PC-9 (cell line): ENCODE measurements at regions of chr1 and their contacts with region 1.

Region 1: DNA sequence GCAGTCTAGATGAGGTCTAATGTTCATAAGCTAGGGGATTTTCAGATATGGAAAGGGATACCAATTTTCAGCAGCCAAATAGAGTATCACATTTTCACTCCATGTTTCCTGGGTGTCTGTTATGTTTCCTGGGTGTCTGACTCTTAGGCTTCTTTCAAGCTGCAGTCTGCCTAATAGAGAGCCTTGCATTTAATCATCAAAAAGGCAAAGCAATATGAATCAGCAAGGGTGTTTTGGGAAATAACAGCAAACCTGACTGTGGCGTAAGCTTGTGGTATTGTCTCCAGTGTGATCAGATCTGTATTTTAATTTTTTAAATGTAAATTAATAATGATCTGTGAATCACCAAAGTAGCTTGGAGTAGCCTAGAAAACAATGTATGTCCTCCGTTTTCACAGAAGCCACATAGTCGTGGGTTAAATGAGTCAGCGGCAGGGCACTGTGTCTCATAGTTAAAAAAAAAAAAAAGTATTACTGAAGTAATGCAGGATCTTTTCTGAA is 10.4 kb downstream of the LGALS8 start:
- DNase-seq: peak in 1 of 2 experiments; percentile 74
- H3K4me3 ChIP-seq: no peak overlapping the region
- H3K27ac ChIP-seq: peak overlapping the region; percentile 69
- H3K4me1 ChIP-seq: peaks cover 52% of the 10 kb centered on the region
- H3K27me3 ChIP-seq: no peaks in the 10 kb centered on the region
- CTCF ChIP-seq: no peak

Region 2: DNA sequence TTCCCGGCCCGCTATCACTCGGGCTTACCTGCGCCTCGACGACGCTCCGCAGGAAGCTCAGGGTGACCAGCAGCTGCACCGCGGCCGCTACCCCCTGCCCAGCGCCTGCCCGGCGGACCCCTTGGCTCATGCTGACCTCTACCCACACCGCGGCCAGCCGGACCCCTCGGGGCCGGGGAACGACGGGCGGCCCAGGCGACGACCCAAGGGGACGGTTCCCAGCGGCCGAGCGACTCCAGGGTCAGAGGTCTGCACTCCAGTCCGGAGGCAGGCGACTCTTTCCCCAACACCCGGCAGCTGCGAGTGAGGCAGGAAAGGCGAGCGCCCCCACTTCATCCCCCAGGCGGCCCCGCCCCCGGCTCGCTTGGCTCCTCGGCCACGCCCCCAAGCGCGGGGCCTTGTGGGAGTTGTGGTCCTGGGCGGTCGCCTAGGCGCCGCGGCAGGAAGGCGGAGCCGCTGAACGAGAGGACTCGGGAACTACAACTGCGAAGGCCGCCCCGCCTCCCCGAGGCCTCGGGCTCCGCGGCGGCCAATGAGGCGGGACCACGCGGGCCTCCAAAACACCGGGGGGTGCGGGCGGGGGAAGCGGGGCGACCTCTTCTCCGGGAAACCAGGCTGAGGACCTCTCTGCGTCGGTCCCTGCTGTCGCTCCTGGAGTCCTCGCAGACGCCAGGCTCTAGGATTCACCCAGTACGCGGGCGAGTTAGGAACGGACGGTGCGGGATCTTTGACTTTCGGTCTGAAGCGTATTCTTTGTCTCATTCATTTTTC is 252.4 kb before region 1 on chr1 and contains the start of gene ERO1B:
- CTCF ChIA-PET with region 1: no interaction called
- POLR2A ChIA-PET with region 1: no interaction called
- intact Hi-C with region 1: loop called (anchors 5 kb)
- DNase-seq: peak in 1 of 2 experiments; percentile 74
- H3K4me3 ChIP-seq: no peak within 1 kb of the TSS
- H3K27ac ChIP-seq: no peak within 1 kb of the TSS
- H3K4me1 ChIP-seq: no peaks in the 10 kb centered on the region
- H3K27me3 ChIP-seq: no peaks in the 10 kb centered on the region
- CTCF ChIP-seq: no peak
- total RNA-seq, gene ERO1B: not detected in 2 replicates

Region 3: DNA sequence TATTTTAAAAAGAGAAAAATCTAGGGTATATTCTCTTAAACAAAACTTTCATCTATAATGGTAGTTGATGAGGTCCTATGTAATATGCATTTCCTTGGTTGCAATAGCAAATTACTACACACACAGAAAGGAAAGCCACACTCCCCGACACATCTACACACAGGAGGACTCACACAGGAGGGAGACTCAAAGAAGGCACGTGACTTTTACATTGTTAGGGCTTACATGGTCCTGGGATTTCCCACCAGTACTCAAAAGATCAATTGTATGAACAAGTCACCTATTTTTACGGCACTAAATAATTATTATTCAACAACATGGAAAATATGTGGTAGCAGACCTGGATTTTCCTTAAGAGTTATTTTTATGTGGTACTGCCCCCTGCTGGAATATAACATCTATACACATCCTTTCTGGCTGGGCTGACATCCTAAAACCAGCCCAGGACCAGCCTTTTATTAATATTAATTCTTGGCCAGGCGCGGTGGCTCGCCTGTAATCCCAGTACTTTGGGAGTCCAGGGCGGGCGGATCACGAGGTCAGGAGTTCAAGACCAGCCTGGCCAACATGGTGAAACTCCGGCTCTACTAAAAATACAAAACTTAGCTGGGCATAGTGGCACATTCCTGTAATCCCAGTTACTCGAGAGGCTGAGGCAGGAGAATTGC is 44.4 kb before region 1 on chr1:
- CTCF ChIA-PET with region 1: no interaction called
- POLR2A ChIA-PET with region 1: no interaction called
- intact Hi-C with region 1: loop called (anchors 5 kb)
- DNase-seq: no peak
- H3K4me3 ChIP-seq: no peak overlapping the region
- H3K27ac ChIP-seq: no peak overlapping the region
- H3K4me1 ChIP-seq: peaks cover 23% of the 10 kb centered on the region
- H3K27me3 ChIP-seq: no peaks in the 10 kb centered on the region
- CTCF ChIP-seq: peak; percentile 87